ENCODE measurements at regions of chr11 and their contacts with region 1.

Region 1: DNA sequence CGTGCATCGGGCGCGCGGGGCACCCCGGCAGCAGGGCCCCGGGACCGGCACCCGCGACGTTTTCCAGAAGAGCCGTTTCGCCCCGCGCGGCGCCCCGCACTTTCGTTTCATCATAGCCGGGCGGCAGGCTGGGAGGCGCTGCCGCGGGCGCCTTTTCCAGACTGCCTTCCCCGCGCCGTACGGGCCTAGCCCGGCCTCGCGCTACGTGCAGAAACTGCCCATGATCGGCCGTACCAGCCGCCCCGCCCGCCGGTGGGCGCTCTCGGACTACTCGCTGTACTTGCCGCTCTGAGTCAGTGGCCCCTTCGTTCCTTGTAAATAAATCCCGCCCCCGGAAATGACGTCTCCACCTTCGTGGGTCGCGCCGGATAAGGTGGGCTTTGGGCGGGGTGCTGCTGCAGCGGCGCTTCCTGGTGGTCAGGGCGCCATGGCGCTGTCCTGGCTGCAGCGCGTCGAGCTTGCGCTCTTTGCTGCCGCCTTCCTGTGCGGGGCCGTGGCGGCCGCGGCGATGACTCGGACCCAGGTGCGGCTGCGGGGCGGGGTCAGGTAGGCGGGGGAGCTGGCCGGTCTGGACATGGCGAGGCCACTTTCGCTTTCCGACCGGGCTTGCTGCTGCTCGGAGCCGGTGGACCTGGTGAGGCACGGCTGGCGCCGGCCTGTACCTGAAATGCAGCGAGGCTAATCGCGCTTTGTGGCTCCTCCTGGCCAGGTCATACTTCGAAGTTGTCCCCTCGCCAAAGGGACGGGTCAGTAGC is at the start of gene TMEM179B:
- DNase-seq: peak; percentile 94 to 100 (median 99)
- ATAC-seq: peak; percentile 68
- H3K4me3 ChIP-seq: peak within 1 kb of the TSS; percentile 94 to 96
- H3K4me3 Mint-ChIP-seq: peak within 1 kb of the TSS; percentile 94
- H3K27ac ChIP-seq: peak within 1 kb of the TSS; percentile 89 to 91
- H3K27ac Mint-ChIP-seq: peak within 1 kb of the TSS; percentile 95
- H3K4me1 ChIP-seq: peaks cover 42% of the 10 kb centered on the region
- H3K4me1 Mint-ChIP-seq: peaks cover 41% of the 10 kb centered on the region
- H3K27me3 ChIP-seq: no peaks in the 10 kb centered on the region
- H3K27me3 Mint-ChIP-seq: no peaks in the 10 kb centered on the region
- CTCF ChIP-seq: peak; percentile 34
- total RNA-seq, gene TMEM179B: 27.5 to 28.4 TPM

Region 2: DNA sequence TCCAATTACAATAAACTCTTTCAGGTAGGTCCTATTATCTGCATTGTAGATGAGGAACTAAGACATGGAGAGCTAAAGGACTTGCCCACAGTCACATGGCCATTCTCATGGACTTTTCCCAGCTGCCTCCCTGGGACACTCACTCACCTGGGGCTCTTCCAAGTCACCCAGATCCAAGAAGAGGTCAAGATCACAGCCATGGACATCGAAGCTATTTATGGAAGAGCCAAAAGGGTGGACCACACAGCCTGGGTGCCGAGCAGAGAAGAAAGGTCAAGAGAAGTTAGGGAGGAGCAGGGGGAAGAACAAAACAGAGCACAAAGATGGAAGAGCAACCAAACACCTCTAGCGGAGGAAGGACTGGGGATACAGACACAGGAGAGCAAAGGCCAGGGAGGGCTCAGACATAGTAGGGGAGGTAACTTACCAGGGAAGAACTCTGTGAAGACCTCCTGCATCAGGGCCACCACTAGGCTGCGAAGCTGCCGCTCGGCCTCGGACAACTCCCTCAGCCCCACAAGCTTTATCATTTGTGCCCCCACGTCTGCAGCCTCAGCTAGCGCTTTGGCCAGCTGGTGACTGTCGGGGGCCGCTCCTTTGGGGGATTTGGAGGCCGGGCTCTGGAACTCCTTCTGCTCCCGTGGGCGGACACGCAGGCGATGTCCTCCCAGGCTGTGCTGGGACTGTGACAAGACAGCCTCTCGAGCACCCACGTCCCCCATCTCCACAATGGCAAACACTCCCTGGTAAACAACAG is 206.0 kb before region 1 on chr11:
- CTCF ChIA-PET with region 1: no interaction called
- POLR2A ChIA-PET with region 1: no interaction called
- intact Hi-C with region 1: no loop called
- DNase-seq: no peak
- ATAC-seq: no peak
- H3K4me3 ChIP-seq: no peak overlapping the region
- H3K4me3 Mint-ChIP-seq: no peak overlapping the region
- H3K27ac ChIP-seq: no peak overlapping the region
- H3K27ac Mint-ChIP-seq: no peak overlapping the region
- H3K4me1 ChIP-seq: no peaks in the 10 kb centered on the region
- H3K4me1 Mint-ChIP-seq: peaks cover 16% of the 10 kb centered on the region
- H3K27me3 ChIP-seq: no peaks in the 10 kb centered on the region
- H3K27me3 Mint-ChIP-seq: no peaks in the 10 kb centered on the region
- CTCF ChIP-seq: no peak

Region 3: DNA sequence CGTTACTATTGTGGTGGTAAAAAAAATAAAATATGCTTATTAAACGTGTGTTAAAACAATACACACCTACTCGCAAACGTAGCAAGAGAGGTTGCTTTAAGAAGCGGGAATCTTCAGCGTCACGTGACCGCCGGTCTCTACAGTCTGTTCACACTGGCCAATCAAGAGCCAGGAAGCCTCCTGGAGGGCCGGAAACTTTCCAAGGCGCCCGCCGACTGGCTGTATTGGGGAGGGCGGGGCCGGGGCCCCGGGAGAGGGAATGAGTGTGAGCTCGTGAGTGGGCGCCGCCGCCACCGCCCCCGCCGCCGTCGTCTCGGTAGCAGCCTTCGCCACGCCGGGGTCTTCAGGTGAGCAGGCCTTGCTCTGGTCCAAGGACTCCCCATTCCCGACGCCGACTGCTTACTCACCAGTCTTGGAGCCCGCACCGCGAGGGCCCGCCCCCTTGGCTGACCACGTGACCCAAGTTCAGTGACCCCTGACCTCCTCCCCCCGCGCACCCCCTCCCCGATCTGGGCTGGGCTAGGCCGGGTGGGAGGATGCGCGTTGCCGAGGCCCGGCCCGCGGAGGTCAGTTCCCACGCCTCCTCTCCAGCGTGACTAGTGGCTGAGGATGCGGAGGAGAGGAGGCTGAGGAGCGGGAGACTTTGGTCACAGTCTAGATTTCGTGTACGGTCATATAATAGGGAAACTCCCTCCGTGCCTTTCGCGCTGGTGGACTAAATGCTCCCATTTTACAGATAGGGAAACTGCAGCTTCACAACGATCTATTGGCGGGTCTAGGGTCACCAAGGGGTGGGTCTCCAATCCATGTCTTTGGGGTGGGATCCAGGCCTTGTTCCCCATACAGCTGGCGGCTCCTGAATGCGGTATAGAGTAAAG is 15.8 kb before region 1 on chr11 and contains the start of gene TAF6L:
- CTCF ChIA-PET with region 1: interaction called, 74 read pairs
- POLR2A ChIA-PET with region 1: interaction called, 17 read pairs
- intact Hi-C with region 1: loop called (anchors 1 kb)
- DNase-seq: peak; percentile 74 to 93 (median 87)
- ATAC-seq: peak; percentile 83
- H3K4me3 ChIP-seq: peak within 1 kb of the TSS; percentile 66 to 78
- H3K4me3 Mint-ChIP-seq: peak within 1 kb of the TSS; percentile 91
- H3K27ac ChIP-seq: peak within 1 kb of the TSS; percentile 64 to 83
- H3K27ac Mint-ChIP-seq: peak within 1 kb of the TSS; percentile 94
- H3K4me1 ChIP-seq: peaks cover 22% of the 10 kb centered on the region
- H3K4me1 Mint-ChIP-seq: peaks cover 27% of the 10 kb centered on the region
- H3K27me3 ChIP-seq: no peaks in the 10 kb centered on the region
- H3K27me3 Mint-ChIP-seq: no peaks in the 10 kb centered on the region
- CTCF ChIP-seq: no peak
- total RNA-seq, gene TAF6L: 10.3 to 13.2 TPM

Region 4: DNA sequence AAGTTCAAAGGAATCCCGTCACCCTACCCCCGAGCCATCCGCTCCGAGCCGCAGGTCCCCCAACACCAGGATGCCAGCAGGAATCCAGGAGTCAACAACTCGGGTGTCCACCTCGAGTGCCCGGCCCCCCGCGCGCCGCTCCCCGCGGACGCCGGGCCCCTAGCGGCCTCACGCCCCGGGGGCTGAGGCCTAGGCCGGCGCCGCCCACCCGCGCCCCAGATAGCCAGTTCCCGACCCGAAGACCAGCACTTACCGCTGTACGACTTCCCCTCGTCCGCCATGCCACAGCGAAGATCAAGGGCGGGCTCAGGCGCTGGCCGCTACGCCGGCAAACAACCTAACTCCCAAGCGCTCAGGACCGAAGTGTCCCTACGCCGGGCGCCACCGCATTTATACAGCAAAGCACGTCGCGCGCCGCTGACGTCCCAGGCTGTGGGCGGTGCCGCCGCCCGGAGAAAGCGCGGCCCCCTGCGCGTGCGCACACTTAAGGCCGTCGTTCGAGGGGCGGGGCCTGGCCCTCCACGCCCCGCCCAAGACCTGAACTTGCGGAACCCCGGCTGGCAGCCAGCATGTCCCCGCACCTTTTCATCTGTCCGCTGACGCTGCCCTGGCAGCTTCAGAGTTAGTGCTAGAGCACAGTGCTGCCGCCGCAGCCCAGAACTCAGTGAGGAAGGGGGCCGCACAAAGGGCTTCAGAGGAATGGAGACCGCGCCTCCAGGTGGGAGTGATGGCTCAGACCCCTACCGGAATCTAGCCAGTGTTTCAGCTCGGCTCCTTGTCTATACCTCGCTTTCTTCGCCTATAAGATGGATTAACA is 18.1 kb after region 1 on chr11 and contains the start of gene NXF1:
- CTCF ChIA-PET with region 1: interaction called, 13 read pairs
- POLR2A ChIA-PET with region 1: interaction called, 9 read pairs
- intact Hi-C with region 1: loop called (anchors 1 kb)
- DNase-seq: peak; percentile 92 to 99 (median 96)
- ATAC-seq: peak; percentile 86
- H3K4me3 ChIP-seq: peak within 1 kb of the TSS; percentile 74 to 88
- H3K4me3 Mint-ChIP-seq: peak within 1 kb of the TSS; percentile 100
- H3K27ac ChIP-seq: peak within 1 kb of the TSS; percentile 78 to 95
- H3K27ac Mint-ChIP-seq: peak within 1 kb of the TSS; percentile 99
- H3K4me1 ChIP-seq: peaks cover 20% of the 10 kb centered on the region
- H3K4me1 Mint-ChIP-seq: peaks cover 37% of the 10 kb centered on the region
- H3K27me3 ChIP-seq: no peaks in the 10 kb centered on the region
- H3K27me3 Mint-ChIP-seq: no peaks in the 10 kb centered on the region
- CTCF ChIP-seq: no peak
- total RNA-seq, gene NXF1: 356 TPM

Region 5: DNA sequence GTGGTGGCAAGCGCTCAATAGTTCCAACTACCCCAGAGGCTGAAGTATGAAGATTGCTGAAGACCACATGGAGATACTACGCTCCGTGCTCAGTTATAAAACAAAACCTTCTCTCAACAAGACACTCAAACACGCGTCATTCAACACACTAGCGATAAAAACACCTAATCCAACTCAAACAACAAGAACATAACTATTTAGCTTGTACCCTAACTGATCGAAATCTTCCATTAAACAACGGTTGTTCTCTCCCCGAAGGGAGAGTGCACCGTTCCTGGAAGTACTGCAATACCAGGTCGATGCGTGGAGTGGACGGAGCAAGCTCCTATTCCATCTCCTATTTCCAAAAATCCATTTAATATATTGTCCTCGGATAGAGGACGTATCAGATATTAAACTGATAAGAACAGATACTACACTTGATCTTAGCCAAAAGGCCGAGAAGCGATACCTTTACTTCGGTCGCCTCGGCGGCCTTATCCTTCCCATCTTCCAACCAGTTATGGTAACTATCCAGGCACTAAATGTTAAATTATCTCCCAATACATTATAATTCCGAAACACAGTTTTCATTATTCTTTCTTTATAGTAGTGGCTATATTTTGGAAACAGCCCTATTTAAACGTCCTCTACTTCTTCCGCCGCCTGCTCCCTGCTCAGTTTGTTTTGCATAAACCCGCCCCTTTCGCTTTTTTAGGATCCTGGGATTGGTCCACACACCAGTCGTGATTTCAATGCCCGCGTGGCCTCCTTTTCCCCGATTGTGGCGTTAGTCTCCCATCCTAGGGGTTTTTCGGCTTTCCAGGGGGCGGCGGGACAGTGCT is 54.4 kb after region 1 on chr11:
- CTCF ChIA-PET with region 1: interaction called, 13 read pairs
- POLR2A ChIA-PET with region 1: interaction called, 165 read pairs
- intact Hi-C with region 1: loop called (anchors 1 kb)
- DNase-seq: peak; percentile 69 to 95 (median 80)
- ATAC-seq: peak; percentile 49
- H3K4me3 ChIP-seq: peak overlapping the region; percentile 61 to 79
- H3K4me3 Mint-ChIP-seq: no peak overlapping the region
- H3K27ac ChIP-seq: peak overlapping the region; percentile 97 to 99
- H3K27ac Mint-ChIP-seq: no peak overlapping the region
- H3K4me1 ChIP-seq: peaks cover 32% of the 10 kb centered on the region
- H3K4me1 Mint-ChIP-seq: peaks cover 25% of the 10 kb centered on the region
- H3K27me3 ChIP-seq: no peaks in the 10 kb centered on the region
- H3K27me3 Mint-ChIP-seq: no peaks in the 10 kb centered on the region
- CTCF ChIP-seq: no peak

Region 6: DNA sequence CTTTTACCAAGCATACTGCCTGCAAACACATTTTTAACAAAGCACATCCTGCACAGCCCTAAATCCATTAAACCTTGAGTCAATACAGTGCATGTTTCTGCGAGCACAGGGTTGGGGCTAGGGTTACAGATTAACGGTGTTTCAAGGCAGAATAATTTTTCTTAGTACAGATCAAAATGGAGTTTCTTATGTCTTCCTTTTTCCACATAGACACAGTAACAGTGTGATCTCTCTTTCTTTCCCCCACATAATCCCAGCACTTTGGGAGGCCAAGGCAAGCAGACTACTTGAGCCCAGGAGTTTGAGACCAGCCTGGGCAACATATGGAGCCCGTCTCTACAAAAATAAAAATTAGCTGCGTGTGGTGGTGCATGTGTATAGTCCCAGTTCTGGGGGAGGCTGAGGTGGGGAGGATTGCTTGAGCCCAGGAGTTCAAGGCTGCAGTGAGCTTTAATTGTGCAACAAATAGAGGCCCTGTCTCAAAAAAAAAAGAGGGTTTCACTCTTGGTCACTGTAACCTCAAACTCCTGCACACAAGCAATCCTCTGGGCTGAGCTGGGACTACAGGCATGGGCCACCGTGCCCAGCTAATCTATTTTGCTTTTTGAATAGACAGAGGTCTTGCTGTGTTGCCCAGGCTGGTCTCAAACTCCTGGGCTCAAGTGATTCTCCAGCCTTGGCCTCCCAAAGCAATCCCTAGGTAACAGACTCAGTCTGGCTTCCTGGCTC is 73.8 kb after region 1 on chr11:
- CTCF ChIA-PET with region 1: interaction called, 56 read pairs
- POLR2A ChIA-PET with region 1: interaction called, 102 read pairs
- intact Hi-C with region 1: loop called (anchors 1 kb)
- DNase-seq: no peak
- ATAC-seq: no peak
- H3K4me3 ChIP-seq: no peak overlapping the region
- H3K4me3 Mint-ChIP-seq: no peak overlapping the region
- H3K27ac ChIP-seq: no peak overlapping the region
- H3K27ac Mint-ChIP-seq: no peak overlapping the region
- H3K4me1 ChIP-seq: peaks cover 6% of the 10 kb centered on the region
- H3K4me1 Mint-ChIP-seq: peaks cover 21% of the 10 kb centered on the region
- H3K27me3 ChIP-seq: no peaks in the 10 kb centered on the region
- H3K27me3 Mint-ChIP-seq: no peaks in the 10 kb centered on the region
- CTCF ChIP-seq: no peak

Measured in CD8-positive, alpha-beta T cell (primary cell).